Activated CD4-positive, alpha-beta T cell treated with anti-CD3 and anti-CD28 coated beads, Interleukin-2, amount 10 ng/mL, durations not matched to agents 7 days and 5 days (primary cell): ENCODE measurements at regions of chr19 and their contacts with region 1.

Region 1: DNA sequence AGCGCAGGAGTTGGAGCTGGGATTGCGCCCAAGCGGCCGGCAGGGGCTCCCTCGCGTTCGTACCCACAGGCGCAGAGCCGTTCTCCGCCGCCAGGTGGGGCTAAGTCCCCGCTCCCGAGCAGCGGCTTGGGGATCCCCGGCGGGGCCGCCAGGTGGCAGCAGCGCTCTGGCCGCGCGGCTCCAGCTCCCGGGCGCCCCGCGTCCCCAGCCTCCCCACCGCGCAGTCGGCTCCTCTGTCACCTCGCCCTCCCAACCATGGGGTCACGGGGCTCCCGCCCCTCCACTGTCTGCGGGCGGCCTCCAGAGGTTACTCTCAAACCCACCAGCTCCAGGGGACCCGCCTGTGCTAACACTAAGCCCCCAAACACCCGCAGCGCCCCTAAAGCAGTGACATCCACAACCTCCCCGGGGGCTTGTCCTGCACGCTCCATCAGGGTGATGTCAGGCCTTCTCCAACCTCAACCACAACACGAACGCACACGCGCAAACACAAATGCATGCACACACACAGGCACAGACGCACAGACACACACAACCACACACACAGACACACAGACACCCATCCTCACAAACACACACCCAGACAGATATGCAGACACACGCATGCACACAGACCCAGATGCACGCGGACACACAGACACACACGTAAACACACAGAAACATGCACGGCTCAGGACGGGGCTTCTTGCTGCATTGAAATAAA is 18.4 kb upstream of the KCTD15 start:
- DNase-seq: peak; percentile 84
- H3K4me3 Mint-ChIP-seq: no peak overlapping the region
- H3K27ac Mint-ChIP-seq: no peak overlapping the region
- H3K4me1 Mint-ChIP-seq: peaks cover 5% of the 10 kb centered on the region
- H3K27me3 Mint-ChIP-seq: peaks cover 11% of the 10 kb centered on the region

Region 2: GRCh38 chr19:33660410-33661124 is 117.7 kb before region 1 on chr19:
- CTCF ChIA-PET with region 1: no interaction called
- POLR2A ChIA-PET with region 1: no interaction called
- DNase-seq: no peak
- H3K4me3 Mint-ChIP-seq: no peak overlapping the region
- H3K27ac Mint-ChIP-seq: no peak overlapping the region
- H3K4me1 Mint-ChIP-seq: no peaks in the 10 kb centered on the region
- H3K27me3 Mint-ChIP-seq: peaks cover 9% of the 10 kb centered on the region

Region 3: GRCh38 chr19:33675501-33676124 is 102.6 kb before region 1 on chr19:
- CTCF ChIA-PET with region 1: no interaction called
- POLR2A ChIA-PET with region 1: no interaction called
- DNase-seq: no peak
- H3K4me3 Mint-ChIP-seq: no peak overlapping the region
- H3K27ac Mint-ChIP-seq: no peak overlapping the region
- H3K4me1 Mint-ChIP-seq: no peaks in the 10 kb centered on the region
- H3K27me3 Mint-ChIP-seq: no peaks in the 10 kb centered on the region

Region 4: DNA sequence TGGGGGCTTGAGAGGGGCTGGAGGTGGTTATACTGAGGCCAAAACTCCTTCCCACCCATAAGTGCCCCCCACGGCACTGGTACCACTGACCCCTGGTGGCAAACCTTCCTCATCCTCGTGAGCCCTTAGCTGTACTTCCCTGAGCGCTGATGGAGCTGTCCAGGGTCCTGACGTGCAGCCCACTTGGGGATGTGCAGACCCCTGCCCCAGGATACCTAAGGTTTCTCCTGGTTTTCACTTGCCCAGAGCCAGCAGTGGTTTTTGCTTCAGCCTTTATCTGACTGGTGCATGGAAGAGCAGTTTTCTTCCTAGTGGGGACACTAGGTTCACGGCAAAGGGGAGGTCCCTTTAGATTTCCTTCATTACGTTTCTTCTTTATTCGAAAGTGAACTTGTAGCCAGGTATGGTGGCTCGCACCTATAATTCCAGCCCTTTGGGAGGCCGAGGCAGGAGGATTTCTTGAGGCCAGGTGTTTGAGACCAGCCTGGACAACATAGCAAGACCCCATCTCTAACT is 10.3 kb before region 1 on chr19:
- CTCF ChIA-PET with region 1: interaction called, 20 read pairs
- POLR2A ChIA-PET with region 1: no interaction called
- DNase-seq: peak; percentile 45
- H3K4me3 Mint-ChIP-seq: no peak overlapping the region
- H3K27ac Mint-ChIP-seq: no peak overlapping the region
- H3K4me1 Mint-ChIP-seq: no peaks in the 10 kb centered on the region
- H3K27me3 Mint-ChIP-seq: no peaks in the 10 kb centered on the region

Region 5: GRCh38 chr19:33795370-33796163 is 17.3 kb after region 1 on chr19:
- CTCF ChIA-PET with region 1: interaction called, 19 read pairs
- POLR2A ChIA-PET with region 1: no interaction called
- DNase-seq: peak; percentile 31
- H3K4me3 Mint-ChIP-seq: peak overlapping the region; percentile 64
- H3K27ac Mint-ChIP-seq: peak overlapping the region; percentile 57
- H3K4me1 Mint-ChIP-seq: peaks cover 2% of the 10 kb centered on the region
- H3K27me3 Mint-ChIP-seq: peaks cover 46% of the 10 kb centered on the region

Region 6: DNA sequence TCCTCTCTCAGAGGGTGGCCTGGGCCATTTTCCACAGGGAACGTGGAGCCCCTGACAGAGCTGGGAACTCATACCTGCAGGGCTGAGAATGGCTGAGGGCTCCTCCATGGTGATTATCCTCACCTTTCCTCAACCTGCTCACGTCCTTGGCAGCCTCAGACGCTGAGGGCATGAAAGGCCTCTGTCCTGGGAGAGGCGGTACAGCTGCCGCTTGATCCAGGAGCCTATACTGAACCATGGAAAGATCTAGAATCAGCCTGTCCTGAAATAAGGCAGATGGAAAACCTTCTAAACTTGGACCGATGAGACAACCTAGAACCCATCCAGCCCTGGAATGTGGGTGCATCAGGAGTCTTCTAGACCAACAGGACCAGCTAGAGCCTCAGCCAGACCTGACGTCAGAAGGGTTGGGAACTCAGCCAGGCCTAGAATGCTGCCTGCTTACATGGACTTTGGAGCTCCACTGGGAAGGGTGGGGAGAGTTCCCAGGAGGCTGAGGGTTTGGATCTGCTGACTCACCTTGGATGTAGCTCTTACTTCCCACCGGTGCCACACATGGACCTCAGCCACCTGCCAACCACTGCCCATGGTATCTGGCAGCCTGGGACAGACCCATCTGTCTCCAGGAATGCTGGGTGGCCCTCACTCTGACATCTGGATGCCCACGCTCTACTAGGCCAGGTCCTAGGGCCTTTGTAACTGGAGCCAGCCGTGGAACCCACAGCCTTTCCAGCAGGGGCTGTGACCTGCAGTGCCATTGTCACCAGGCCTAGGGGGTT is 26.0 kb after region 1 on chr19:
- CTCF ChIA-PET with region 1: interaction called, 13 read pairs
- POLR2A ChIA-PET with region 1: no interaction called
- DNase-seq: no peak
- H3K4me3 Mint-ChIP-seq: no peak overlapping the region
- H3K27ac Mint-ChIP-seq: no peak overlapping the region
- H3K4me1 Mint-ChIP-seq: peaks cover 8% of the 10 kb centered on the region
- H3K27me3 Mint-ChIP-seq: peaks cover 4% of the 10 kb centered on the region

Region 7: GRCh38 chr19:33998739-33999345 is 220.6 kb after region 1 on chr19:
- CTCF ChIA-PET with region 1: interaction called, 11 read pairs
- POLR2A ChIA-PET with region 1: no interaction called
- DNase-seq: no peak
- H3K4me3 Mint-ChIP-seq: no peak overlapping the region
- H3K27ac Mint-ChIP-seq: no peak overlapping the region
- H3K4me1 Mint-ChIP-seq: no peaks in the 10 kb centered on the region
- H3K27me3 Mint-ChIP-seq: peaks cover 9% of the 10 kb centered on the region

Region 8: GRCh38 chr19:34089566-34089965 is 311.3 kb after region 1 on chr19:
- CTCF ChIA-PET with region 1: interaction called, 10 read pairs
- POLR2A ChIA-PET with region 1: no interaction called
- DNase-seq: no peak
- H3K4me3 Mint-ChIP-seq: no peak overlapping the region
- H3K27ac Mint-ChIP-seq: no peak overlapping the region
- H3K4me1 Mint-ChIP-seq: no peaks in the 10 kb centered on the region
- H3K27me3 Mint-ChIP-seq: peaks cover 2% of the 10 kb centered on the region

Region 9: GRCh38 chr19:34096020-34096915 is 318.0 kb after region 1 on chr19:
- CTCF ChIA-PET with region 1: interaction called, 20 read pairs
- POLR2A ChIA-PET with region 1: no interaction called
- DNase-seq: peak; percentile 12
- H3K4me3 Mint-ChIP-seq: no peak overlapping the region
- H3K27ac Mint-ChIP-seq: no peak overlapping the region
- H3K4me1 Mint-ChIP-seq: no peaks in the 10 kb centered on the region
- H3K27me3 Mint-ChIP-seq: peaks cover 15% of the 10 kb centered on the region